HepG2 (cell line): ENCODE measurements at regions of chr4 and their contacts with region 1.

Region 1: DNA sequence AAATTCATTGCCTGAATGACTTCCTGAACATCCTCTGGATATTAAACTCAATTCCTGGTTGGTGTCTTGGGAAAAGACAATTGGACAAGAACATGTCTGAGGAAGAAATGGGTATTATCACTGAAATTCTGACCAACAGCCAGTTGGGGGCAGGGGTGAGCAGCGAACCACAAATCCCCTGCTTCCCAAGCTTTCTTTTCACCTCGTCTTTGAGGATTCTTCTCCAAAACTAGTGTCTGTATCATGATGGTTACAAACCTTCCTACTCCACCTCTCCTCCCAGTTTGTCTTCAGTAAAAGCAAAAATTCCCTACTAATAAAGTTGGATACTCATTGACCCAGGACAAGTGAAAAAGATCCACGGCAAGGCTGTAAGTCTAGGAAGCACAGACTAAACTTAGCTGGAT is 48.3 kb upstream of the WDR1 start:
- DNase-seq: peak; percentile 14
- ATAC-seq: peak; percentile 29; the same call in 1 of the 3 replicates
- H3K4me3 ChIP-seq: no peak overlapping the region
- H3K27ac ChIP-seq: no peak overlapping the region
- H3K4me1 ChIP-seq: peaks cover 14% of the 10 kb centered on the region
- H3K27me3 ChIP-seq: no peaks in the 10 kb centered on the region
- CTCF ChIP-seq: peak; percentile 68
- EP300 ChIP-seq: no peak
- POLR2A ChIP-seq: no peak
- RAD21 ChIP-seq: no peak

Region 2: GRCh38 chr4:10321931-10322330 is 157.1 kb after region 1 on chr4:
- CTCF ChIA-PET with region 1: no interaction called
- POLR2A ChIA-PET with region 1: no interaction called
- in situ Hi-C with region 1: no loop called
- intact Hi-C with region 1: loop called (anchors 10 kb)
- DNase-seq: no peak
- ATAC-seq: no peak
- H3K4me3 ChIP-seq: no peak overlapping the region
- H3K27ac ChIP-seq: no peak overlapping the region
- H3K4me1 ChIP-seq: peaks cover 17% of the 10 kb centered on the region
- H3K27me3 ChIP-seq: no peaks in the 10 kb centered on the region; a peak in 1 of 5 replicates
- CTCF ChIP-seq: no peak
- EP300 ChIP-seq: no peak
- POLR2A ChIP-seq: no peak
- RAD21 ChIP-seq: no peak

Region 3: GRCh38 chr4:10403633-10404445 is 239.0 kb after region 1 on chr4:
- CTCF ChIA-PET with region 1: interaction called, 7 read pairs
- POLR2A ChIA-PET with region 1: no interaction called
- in situ Hi-C with region 1: loop called (anchors 5 kb)
- intact Hi-C with region 1: loop called (anchors 1 kb)
- DNase-seq: peak; percentile 29
- ATAC-seq: peak; percentile 65
- H3K4me3 ChIP-seq: no peak overlapping the region
- H3K27ac ChIP-seq: no peak overlapping the region
- H3K4me1 ChIP-seq: no peaks in the 10 kb centered on the region
- H3K27me3 ChIP-seq: no peaks in the 10 kb centered on the region
- CTCF ChIP-seq: peak; percentile 61
- EP300 ChIP-seq: no peak
- POLR2A ChIP-seq: no peak
- RAD21 ChIP-seq: no peak